ENCODE measurements at regions of chr16 and their contacts with region 1.

Region 1: GRCh38 chr16:29678691-29679267 is at the start of gene QPRT:
- DNase-seq: no peak
- ATAC-seq: no peak
- H3K4me3 ChIP-seq: peak within 1 kb of the TSS in 3 of 4 donors; percentile 6 to 18 (median 17)
- H3K27ac ChIP-seq: peak within 1 kb of the TSS in 2 of 4 donors; percentile 52 to 54
- H3K4me1 ChIP-seq: no peaks in the 10 kb centered on the region
- H3K27me3 ChIP-seq: no peaks in the 10 kb centered on the region
- CTCF ChIP-seq: no peak
- POLR2A ChIP-seq: no peak
- total RNA-seq, gene QPRT: 0.78 to 2.5 (median 1.5) TPM

Region 2: GRCh38 chr16:30005341-30006094 is 326.7 kb after region 1 on chr16:
- in situ Hi-C with region 1: loop called in 1 of 4 experiments (anchors 25 kb)
- intact Hi-C with region 1: no loop called
- DNase-seq: no peak
- ATAC-seq: peak; percentile 53 to 58
- H3K4me3 ChIP-seq: peak overlapping the region in 1 of 4 donors; percentile 15
- H3K27ac ChIP-seq: no peak overlapping the region
- H3K4me1 ChIP-seq: peaks cover 1% of the 10 kb centered on the region in 2 donors
- H3K27me3 ChIP-seq: peaks cover 17 to 21% (median 21%) of the 10 kb centered on the region in 3 donors
- CTCF ChIP-seq: peak; percentile 62 to 85 (median 77)
- POLR2A ChIP-seq: no peak